H1 (cell line): ENCODE measurements at regions of chr13 and their contacts with region 1.

Region 1: DNA sequence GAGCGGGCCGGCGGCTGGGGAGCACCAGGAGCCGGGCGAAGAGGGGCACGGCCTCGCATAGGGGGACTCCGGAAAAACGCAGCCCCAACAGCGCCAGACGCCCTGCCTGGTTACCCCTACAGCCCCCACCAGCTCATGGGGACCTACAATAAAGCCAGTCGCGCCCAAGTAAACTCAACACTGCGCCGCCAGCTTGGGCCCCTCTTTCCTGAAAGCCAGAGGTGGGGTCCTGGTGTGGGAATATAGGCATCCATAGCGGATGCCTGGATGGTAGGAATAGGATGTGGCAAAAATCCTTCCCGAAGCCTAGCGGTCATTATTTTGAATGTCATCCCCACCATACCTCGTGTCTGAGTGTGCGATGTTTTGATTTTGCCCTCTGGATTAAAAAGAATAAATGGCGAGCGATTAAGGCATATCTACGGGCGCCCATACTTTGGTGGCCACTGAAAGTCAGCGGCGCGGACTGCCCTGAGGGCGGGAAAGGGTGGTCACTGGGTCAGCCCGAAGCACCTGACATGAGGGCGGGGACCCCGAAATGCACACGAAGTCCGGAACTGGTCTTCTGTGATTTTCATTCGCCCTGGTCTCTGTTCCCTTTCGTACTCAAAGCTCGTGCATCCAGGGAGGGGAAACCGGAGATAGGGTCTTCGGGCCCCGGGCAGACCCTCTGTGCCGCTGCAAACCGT is at the starts of genes NHLRC3 and PROSER1:
- DNase-seq: peak; percentile 66 to 89
- H3K4me3 ChIP-seq: peak within 1 kb of the TSS; percentile 94 to 99 (median 96)
- H3K27ac ChIP-seq: peak within 1 kb of the TSS; percentile 76
- H3K4me1 ChIP-seq: peaks cover 0 to 10% (median under 1%) of the 10 kb centered on the region in 4 experiments; a peak in 4 of 7 replicates
- H3K27me3 ChIP-seq: no peaks in the 10 kb centered on the region; a peak in 1 of 7 replicates
- CTCF ChIP-seq: no peak
- EP300 ChIP-seq: no peak
- POLR2A ChIP-seq: peak; percentile 73 to 91
- RAD21 ChIP-seq: no peak
- total RNA-seq, gene NHLRC3: 12.4 and 13.1 TPM in 2 replicates
- total RNA-seq, gene PROSER1: 98.6 and 116 TPM in 2 replicates

Region 2: GRCh38 chr13:39016787-39017186 is 21.2 kb before region 1 on chr13:
- CTCF ChIA-PET with region 1: interaction called, 15 read pairs
- POLR2A ChIA-PET with region 1: interaction called, 73 read pairs
- DNase-seq: no peak
- H3K4me3 ChIP-seq: no peak overlapping the region
- H3K27ac ChIP-seq: no peak overlapping the region
- H3K4me1 ChIP-seq: no peaks in the 10 kb centered on the region; a peak in 1 of 7 replicates
- H3K27me3 ChIP-seq: no peaks in the 10 kb centered on the region
- CTCF ChIP-seq: peak; percentile 17 to 71 (median 56)
- EP300 ChIP-seq: no peak
- POLR2A ChIP-seq: no peak
- RAD21 ChIP-seq: peak; percentile 61 to 68

Region 3: DNA sequence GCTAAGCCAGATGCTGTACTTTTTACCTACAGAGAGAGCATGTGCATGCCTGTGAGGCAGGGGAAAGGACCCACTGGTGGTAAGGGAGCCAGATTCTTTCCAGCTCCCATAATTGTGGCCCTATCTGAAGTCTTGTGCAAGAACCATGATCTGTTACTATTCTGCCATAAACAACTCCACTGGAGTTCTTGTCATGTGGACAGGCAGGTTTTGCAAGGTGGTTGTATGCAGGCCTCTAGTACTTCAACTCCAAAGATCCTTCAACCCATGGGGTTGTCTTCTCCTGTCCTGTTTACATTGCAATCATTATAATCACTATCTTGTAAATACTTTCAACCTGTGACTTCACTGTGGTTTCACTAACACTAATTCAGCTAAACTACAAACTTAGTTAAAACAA is 14.2 kb before region 1 on chr13:
- CTCF ChIA-PET with region 1: interaction called, 5 read pairs
- POLR2A ChIA-PET with region 1: interaction called, 73 read pairs
- DNase-seq: no peak
- H3K4me3 ChIP-seq: peak overlapping the region in 2 of 4 experiments; percentile 0 to 30; a peak in 1 of 8 replicates
- H3K27ac ChIP-seq: peak overlapping the region; percentile 76
- H3K4me1 ChIP-seq: peaks cover 10 to 25% (median 17%) of the 10 kb centered on the region in 4 experiments; a peak in 5 of 7 replicates
- H3K27me3 ChIP-seq: no peaks in the 10 kb centered on the region
- CTCF ChIP-seq: no peak
- EP300 ChIP-seq: no peak
- POLR2A ChIP-seq: no peak
- RAD21 ChIP-seq: no peak

Region 4: GRCh38 chr13:39051157-39051556 is 13.1 kb after region 1 on chr13:
- CTCF ChIA-PET with region 1: interaction called, 5 read pairs
- POLR2A ChIA-PET with region 1: interaction called, 23 read pairs
- DNase-seq: no peak
- H3K4me3 ChIP-seq: no peak overlapping the region
- H3K27ac ChIP-seq: no peak overlapping the region
- H3K4me1 ChIP-seq: peaks cover 0 to 6% (median 1%) of the 10 kb centered on the region in 4 experiments; a peak in 2 of 7 replicates
- H3K27me3 ChIP-seq: peaks cover 0 to 1% (median 0%) of the 10 kb centered on the region in 4 experiments; a peak in 1 of 7 replicates
- CTCF ChIP-seq: peak in 1 of 3 experiments; percentile 51; a peak in 2 of 4 replicates
- EP300 ChIP-seq: no peak
- POLR2A ChIP-seq: no peak
- RAD21 ChIP-seq: peak; percentile 62 to 68

Region 5: GRCh38 chr13:39226359-39226758 is 188.3 kb after region 1 on chr13:
- CTCF ChIA-PET with region 1: no interaction called
- POLR2A ChIA-PET with region 1: no interaction called
- DNase-seq: no peak
- H3K4me3 ChIP-seq: no peak overlapping the region
- H3K27ac ChIP-seq: no peak overlapping the region
- H3K4me1 ChIP-seq: no peaks in the 10 kb centered on the region
- H3K27me3 ChIP-seq: no peaks in the 10 kb centered on the region
- CTCF ChIP-seq: no peak
- EP300 ChIP-seq: no peak
- POLR2A ChIP-seq: no peak
- RAD21 ChIP-seq: no peak